Calu3 (cell line): ENCODE measurements at regions of chr17 and their contacts with region 1.

Region 1: DNA sequence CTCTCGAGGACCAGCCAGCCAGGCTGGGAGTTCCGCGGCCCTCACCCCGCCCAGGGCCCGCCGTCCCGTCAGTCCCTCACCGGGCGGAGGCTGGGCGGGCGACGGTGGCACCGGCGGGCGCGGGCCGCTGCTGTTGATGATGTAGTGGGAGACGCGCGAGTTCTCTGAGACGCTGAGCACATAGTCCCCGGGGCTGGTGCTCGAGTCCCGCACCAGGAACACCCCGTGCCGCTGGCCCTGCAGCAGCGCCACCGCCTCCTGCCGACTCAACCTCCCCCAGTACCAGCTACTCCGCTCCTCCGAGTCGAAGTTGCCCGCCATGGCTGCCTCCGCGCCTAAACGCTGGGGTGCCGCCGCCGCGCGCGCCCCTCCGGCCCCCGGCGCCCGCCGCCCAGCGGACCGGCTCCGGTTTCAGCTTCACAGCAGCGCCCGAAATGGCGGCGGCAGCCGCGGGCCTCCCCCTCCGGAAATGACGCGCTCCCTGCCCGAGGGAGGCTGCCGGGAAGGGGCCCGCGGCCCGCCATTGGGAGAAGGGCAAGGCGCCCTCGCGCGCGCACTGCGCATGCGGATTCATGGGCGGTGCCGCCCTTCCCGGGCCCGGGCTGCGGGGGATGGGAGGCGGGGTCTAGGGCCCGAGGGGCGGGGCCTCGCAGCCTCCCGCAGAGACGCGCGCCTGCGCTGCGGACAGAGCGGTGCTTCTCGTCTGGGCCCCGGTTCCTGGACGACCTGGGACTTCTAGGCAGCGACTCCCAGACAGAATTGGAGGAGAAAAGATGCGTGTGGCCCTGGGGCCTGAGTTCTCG is at the start of gene CRK:
- DNase-seq: peak; percentile 97
- H3K4me3 Mint-ChIP-seq: peak within 1 kb of the TSS; percentile 78
- H3K27ac Mint-ChIP-seq: peak within 1 kb of the TSS; percentile 64
- H3K4me1 Mint-ChIP-seq: peaks cover 8% of the 10 kb centered on the region
- H3K27me3 Mint-ChIP-seq: no peaks in the 10 kb centered on the region
- CTCF ChIP-seq: no peak
- total RNA-seq, gene CRK: 38.9 and 40.0 TPM in 2 replicates

Region 2: GRCh38 chr17:992933-993332 is 463.1 kb before region 1 on chr17:
- CTCF ChIA-PET with region 1: no interaction called
- intact Hi-C with region 1: no loop called
- DNase-seq: no peak
- H3K4me3 Mint-ChIP-seq: no peak overlapping the region
- H3K27ac Mint-ChIP-seq: no peak overlapping the region
- H3K4me1 Mint-ChIP-seq: peaks cover 4% of the 10 kb centered on the region
- H3K27me3 Mint-ChIP-seq: no peaks in the 10 kb centered on the region
- CTCF ChIP-seq: no peak

Region 3: GRCh38 chr17:1241929-1242328 is 214.1 kb before region 1 on chr17:
- CTCF ChIA-PET with region 1: no interaction called
- intact Hi-C with region 1: no loop called
- DNase-seq: no peak
- H3K4me3 Mint-ChIP-seq: no peak overlapping the region
- H3K27ac Mint-ChIP-seq: no peak overlapping the region
- H3K4me1 Mint-ChIP-seq: no peaks in the 10 kb centered on the region
- H3K27me3 Mint-ChIP-seq: no peaks in the 10 kb centered on the region
- CTCF ChIP-seq: no peak

Region 4: GRCh38 chr17:1365445-1366039 is 90.5 kb before region 1 on chr17:
- CTCF ChIA-PET with region 1: interaction called, 4 read pairs
- intact Hi-C with region 1: loop called (anchors 10 kb)
- DNase-seq: peak; percentile 46
- H3K4me3 Mint-ChIP-seq: no peak overlapping the region
- H3K27ac Mint-ChIP-seq: no peak overlapping the region
- H3K4me1 Mint-ChIP-seq: peaks cover 30% of the 10 kb centered on the region
- H3K27me3 Mint-ChIP-seq: no peaks in the 10 kb centered on the region
- CTCF ChIP-seq: peak; percentile 55

Region 5: DNA sequence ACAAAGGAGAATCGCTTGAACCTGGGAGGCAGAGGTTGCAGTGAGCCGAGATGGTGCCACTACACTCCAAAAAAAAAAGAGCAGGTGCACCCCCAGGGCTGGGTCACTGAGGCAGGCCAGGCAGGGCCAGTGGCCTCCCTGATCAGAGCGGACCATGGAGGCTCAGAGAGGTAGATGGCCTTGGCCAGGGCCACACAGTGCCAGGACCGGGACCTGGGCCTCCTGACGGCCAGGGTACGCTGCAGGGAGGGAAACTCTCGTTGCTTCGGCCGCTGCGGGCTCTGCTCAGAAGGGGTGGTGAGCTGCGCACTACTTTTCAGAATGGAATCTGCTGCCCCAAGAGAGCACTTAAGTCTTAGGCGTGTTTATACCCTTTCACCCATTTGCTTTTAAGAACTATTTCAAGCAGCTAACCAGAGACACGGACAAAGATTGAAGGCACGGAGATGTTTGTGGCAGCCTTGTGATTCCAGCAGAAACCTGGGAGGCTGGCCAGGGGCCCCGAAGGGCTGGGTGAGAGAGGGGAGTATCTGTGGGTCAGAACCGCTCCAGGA is 19.4 kb after region 1 on chr17:
- CTCF ChIA-PET with region 1: interaction called, 10 read pairs
- intact Hi-C with region 1: no loop called
- DNase-seq: no peak
- H3K4me3 Mint-ChIP-seq: no peak overlapping the region
- H3K27ac Mint-ChIP-seq: no peak overlapping the region
- H3K4me1 Mint-ChIP-seq: no peaks in the 10 kb centered on the region
- H3K27me3 Mint-ChIP-seq: no peaks in the 10 kb centered on the region
- CTCF ChIP-seq: no peak